ENCODE measurements at regions of chr7 and their contacts with region 1.

Region 1: GRCh38 chr7:137656227-137656849 is 190.4 kb downstream of the DGKI start:
- DNase-seq: peak; percentile 7 to 64 (median 34)
- ATAC-seq: no peak
- H3K4me3 ChIP-seq: no peak overlapping the region
- H3K4me3 Mint-ChIP-seq: no peak overlapping the region
- H3K27ac ChIP-seq: no peak overlapping the region
- H3K27ac Mint-ChIP-seq: no peak overlapping the region
- H3K4me1 ChIP-seq: no peaks in the 10 kb centered on the region
- H3K4me1 Mint-ChIP-seq: no peaks in the 10 kb centered on the region
- H3K27me3 ChIP-seq: peaks cover 0 to 2% of the 10 kb centered on the region in 2 experiments
- H3K27me3 Mint-ChIP-seq: peaks cover 16% of the 10 kb centered on the region
- CTCF ChIP-seq: peak; percentile 64

Region 2: DNA sequence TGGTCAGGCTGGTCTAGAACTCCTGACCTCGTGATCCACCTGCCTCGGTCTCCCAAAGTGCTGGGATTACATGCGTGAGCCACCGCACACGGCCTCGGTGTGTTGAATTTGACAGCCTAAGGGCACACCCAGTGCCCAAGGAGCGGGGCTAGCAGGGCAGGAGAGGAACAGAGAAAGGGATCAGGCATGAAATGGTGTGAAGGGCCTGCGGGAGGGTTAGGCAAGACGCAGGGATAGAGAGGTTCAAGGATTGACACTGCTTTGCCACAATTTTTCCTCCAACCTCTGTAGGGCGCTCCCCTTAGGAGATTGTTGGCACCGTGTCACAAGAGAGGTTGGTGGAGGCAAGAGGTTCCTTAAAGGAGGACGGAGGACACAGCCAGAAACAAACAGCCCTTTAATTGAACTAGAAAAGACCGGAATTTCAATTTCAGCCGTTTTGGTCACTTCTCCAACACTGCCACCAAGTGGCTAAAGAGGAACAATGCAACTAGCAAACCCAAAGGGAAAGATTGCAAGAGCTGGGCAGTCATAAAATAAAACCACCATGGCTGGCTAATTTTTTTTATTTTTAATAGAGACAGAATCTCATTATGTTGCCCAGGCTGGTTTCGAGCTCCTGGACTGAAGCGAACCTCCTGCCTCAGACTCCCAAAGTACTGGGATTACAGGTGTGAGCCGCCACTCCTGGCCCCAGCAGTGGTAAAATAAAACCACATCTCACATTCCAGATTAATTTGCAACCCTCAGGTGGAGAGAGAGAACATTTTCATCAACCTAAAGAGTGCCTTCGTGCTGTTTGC is 352.4 kb after region 1 on chr7:
- CTCF ChIA-PET with region 1: no interaction called
- POLR2A ChIA-PET with region 1: no interaction called
- intact Hi-C with region 1: loop called (anchors 2 to 5 kb)
- DNase-seq: peak in 8 of 14 experiments; percentile 11 to 75 (median 28)
- ATAC-seq: peak; percentile 57
- H3K4me3 ChIP-seq: no peak overlapping the region
- H3K4me3 Mint-ChIP-seq: no peak overlapping the region
- H3K27ac ChIP-seq: no peak overlapping the region
- H3K27ac Mint-ChIP-seq: no peak overlapping the region
- H3K4me1 ChIP-seq: peaks cover 5% of the 10 kb centered on the region
- H3K4me1 Mint-ChIP-seq: no peaks in the 10 kb centered on the region
- H3K27me3 ChIP-seq: no peaks in the 10 kb centered on the region
- H3K27me3 Mint-ChIP-seq: no peaks in the 10 kb centered on the region
- CTCF ChIP-seq: peak; percentile 90